Calu3 (cell line): ENCODE measurements at regions of chr7 and their contacts with region 1.

Region 1: GRCh38 chr7:94907026-94907810 is at the start of gene PPP1R9A:
- DNase-seq: peak; percentile 68
- H3K4me3 Mint-ChIP-seq: peak within 1 kb of the TSS; percentile 89
- H3K27ac Mint-ChIP-seq: peak within 1 kb of the TSS; percentile 71
- H3K4me1 Mint-ChIP-seq: peaks cover 23% of the 10 kb centered on the region
- H3K27me3 Mint-ChIP-seq: no peaks in the 10 kb centered on the region
- CTCF ChIP-seq: no peak
- total RNA-seq, gene PPP1R9A: 17.9 and 19.4 TPM in 2 replicates

Region 2: DNA sequence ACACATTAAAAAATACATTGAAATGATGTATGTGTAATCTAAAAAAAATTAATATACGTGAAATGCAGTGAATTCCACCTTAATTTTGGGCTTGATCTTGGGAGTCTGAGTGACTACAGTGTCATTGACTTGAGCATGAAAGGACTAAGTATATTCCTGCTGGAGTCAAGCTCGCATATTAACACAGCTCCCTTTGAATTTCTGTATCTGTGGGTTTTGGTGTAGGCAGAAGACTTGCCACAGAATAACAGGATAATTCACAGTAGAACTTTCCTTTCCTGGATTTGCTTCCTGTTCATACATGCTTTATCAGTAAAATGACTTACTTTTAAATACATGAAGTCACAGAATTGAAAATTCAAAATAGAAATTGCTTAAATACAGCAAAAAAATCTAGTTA is 55.4 kb after region 1 on chr7:
- CTCF ChIA-PET with region 1: no interaction called
- intact Hi-C with region 1: loop called (anchors 5 kb)
- DNase-seq: no peak
- H3K4me3 Mint-ChIP-seq: no peak overlapping the region
- H3K27ac Mint-ChIP-seq: no peak overlapping the region
- H3K4me1 Mint-ChIP-seq: peaks cover 33% of the 10 kb centered on the region
- H3K27me3 Mint-ChIP-seq: no peaks in the 10 kb centered on the region
- CTCF ChIP-seq: no peak

Region 3: DNA sequence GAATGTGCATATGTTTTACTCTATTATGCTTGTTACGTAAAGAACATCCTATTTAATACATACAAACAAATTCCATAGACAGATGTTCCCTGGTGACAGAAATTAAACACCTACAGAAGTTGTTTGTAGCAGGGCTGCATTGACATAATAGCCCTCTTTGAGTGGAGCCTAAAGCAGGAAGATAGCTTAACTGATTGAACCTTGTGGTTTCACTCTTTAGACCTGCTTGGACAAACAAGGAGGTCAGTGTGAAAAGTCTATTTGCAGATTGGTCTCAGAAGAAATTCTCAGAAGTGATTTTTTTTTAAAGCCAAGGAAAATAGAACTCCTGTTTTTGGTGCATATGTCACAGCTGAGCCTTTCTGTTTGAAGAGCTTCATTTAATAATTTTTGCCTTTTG is 121.5 kb after region 1 on chr7:
- CTCF ChIA-PET with region 1: no interaction called
- intact Hi-C with region 1: loop called (anchors 5 kb)
- DNase-seq: peak; percentile 3
- H3K4me3 Mint-ChIP-seq: peak overlapping the region; percentile 32
- H3K27ac Mint-ChIP-seq: no peak overlapping the region
- H3K4me1 Mint-ChIP-seq: peaks cover 12% of the 10 kb centered on the region
- H3K27me3 Mint-ChIP-seq: no peaks in the 10 kb centered on the region
- CTCF ChIP-seq: no peak